HepG2 (cell line): ENCODE measurements at regions of chr17 and their contacts with region 1.

Region 1: GRCh38 chr17:76671123-76671911 is 27.8 kb upstream of the ST6GALNAC1 start:
- DNase-seq: peak; percentile 100
- ATAC-seq: peak; percentile 93
- H3K4me3 ChIP-seq: peak overlapping the region; percentile 66 to 83 (median 80)
- H3K27ac ChIP-seq: peak overlapping the region; percentile 83
- H3K4me1 ChIP-seq: peaks cover 54% of the 10 kb centered on the region
- H3K27me3 ChIP-seq: no peaks in the 10 kb centered on the region; a peak in 1 of 5 replicates
- CTCF ChIP-seq: peak; percentile 46; the same call in 1 of the 2 replicates
- EP300 ChIP-seq: no peak; a peak in 1 of 4 replicates
- POLR2A ChIP-seq: peak; percentile 80 to 83
- RAD21 ChIP-seq: peak; percentile 34; the same call in 1 of the 2 replicates

Region 2: GRCh38 chr17:76467366-76467765 is 204.0 kb before region 1 on chr17 and contains the start of gene AANAT:
- CTCF ChIA-PET with region 1: no interaction called
- POLR2A ChIA-PET with region 1: no interaction called
- in situ Hi-C with region 1: no loop called
- intact Hi-C with region 1: no loop called
- DNase-seq: no peak
- ATAC-seq: no peak
- H3K4me3 ChIP-seq: 0 out of 6 replicates have a peak within 1 kb of the TSS, but pooled peaks of 1 of the 3 experiments have one; percentile 63
- H3K27ac ChIP-seq: no peak within 1 kb of the TSS
- H3K4me1 ChIP-seq: peaks cover 48% of the 10 kb centered on the region
- H3K27me3 ChIP-seq: peaks cover 2 to 21% of the 10 kb centered on the region in 2 experiments; a peak in 3 of 5 replicates
- CTCF ChIP-seq: no peak
- EP300 ChIP-seq: no peak
- POLR2A ChIP-seq: no peak
- RAD21 ChIP-seq: no peak
- total RNA-seq, gene AANAT: not detected in 2 replicates

Region 3: DNA sequence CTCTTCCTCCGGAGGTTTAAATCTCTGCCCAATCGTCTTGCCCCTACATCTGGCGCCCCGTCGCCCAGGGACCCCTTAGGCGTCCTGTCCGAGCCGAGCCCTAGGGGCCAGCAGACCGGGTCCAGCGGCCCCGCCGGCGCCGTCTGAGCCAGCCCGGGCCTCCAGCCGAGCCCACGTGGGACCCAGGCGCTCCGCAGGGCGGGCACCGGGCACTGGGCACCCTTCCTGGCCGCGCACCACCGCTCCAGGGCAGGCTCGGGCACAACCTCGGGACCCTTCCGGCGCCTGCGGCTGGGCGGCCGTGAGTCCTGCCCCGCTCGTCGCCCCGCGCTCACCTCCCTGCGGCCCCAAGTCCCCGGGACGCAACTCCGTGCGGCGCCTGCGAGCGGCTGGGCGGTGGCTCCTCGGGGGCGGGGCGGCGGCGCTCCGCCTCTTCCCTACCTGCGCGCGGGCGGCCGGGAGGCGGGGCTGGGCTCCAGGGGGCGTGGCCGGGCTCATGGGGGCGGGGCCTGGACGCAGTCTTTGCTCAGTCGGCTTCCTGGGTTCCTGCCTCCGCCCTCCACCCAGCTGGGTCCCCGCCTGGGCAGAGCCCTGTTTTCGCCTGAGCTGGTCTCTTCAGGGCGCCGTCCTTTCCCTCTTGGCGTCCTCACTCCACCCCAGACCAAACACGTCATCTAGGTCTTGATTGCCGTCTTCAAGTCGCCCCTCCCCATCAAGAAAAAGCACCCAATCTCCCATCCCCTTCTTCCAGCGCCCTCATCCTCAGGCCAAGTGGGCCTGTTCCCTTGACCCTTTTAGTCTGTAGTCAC is 170.1 kb before region 1 on chr17 and contains the start of gene RHBDF2:
- CTCF ChIA-PET with region 1: no interaction called
- POLR2A ChIA-PET with region 1: interaction called, 18 read pairs
- in situ Hi-C with region 1: no loop called
- intact Hi-C with region 1: no loop called
- DNase-seq: peak; percentile 79
- ATAC-seq: peak; percentile 70
- H3K4me3 ChIP-seq: peak within 1 kb of the TSS; percentile 90 to 99 (median 96)
- H3K27ac ChIP-seq: peak within 1 kb of the TSS; percentile 64
- H3K4me1 ChIP-seq: peaks cover 65% of the 10 kb centered on the region
- H3K27me3 ChIP-seq: no peaks in the 10 kb centered on the region; a peak in 1 of 5 replicates
- CTCF ChIP-seq: no peak; the same call in 1 of the 2 replicates
- EP300 ChIP-seq: 0 out of 4 replicates have a peak, but pooled peaks of 1 of the 2 experiments have one; percentile 17
- POLR2A ChIP-seq: peak; percentile 66 to 94; a peak in 3 of 4 replicates
- RAD21 ChIP-seq: peak; percentile 59
- total RNA-seq, gene RHBDF2: 4.2 and 7.8 TPM in 2 replicates

Region 4: GRCh38 chr17:76557368-76558197 is 113.7 kb before region 1 on chr17:
- CTCF ChIA-PET with region 1: no interaction called
- POLR2A ChIA-PET with region 1: interaction called, 21 read pairs
- in situ Hi-C with region 1: no loop called
- intact Hi-C with region 1: no loop called
- DNase-seq: peak; percentile 98
- ATAC-seq: peak; percentile 95
- H3K4me3 ChIP-seq: peak overlapping the region; percentile 79 to 89 (median 86)
- H3K27ac ChIP-seq: peak overlapping the region; percentile 90
- H3K4me1 ChIP-seq: peaks cover 67% of the 10 kb centered on the region
- H3K27me3 ChIP-seq: no peaks in the 10 kb centered on the region; a peak in 1 of 5 replicates
- CTCF ChIP-seq: peak; percentile 88
- EP300 ChIP-seq: peak in 1 of 2 experiments; percentile 11; a peak in 1 of 4 replicates
- POLR2A ChIP-seq: peak; percentile 99 to 100
- RAD21 ChIP-seq: peak; percentile 64

Region 5: DNA sequence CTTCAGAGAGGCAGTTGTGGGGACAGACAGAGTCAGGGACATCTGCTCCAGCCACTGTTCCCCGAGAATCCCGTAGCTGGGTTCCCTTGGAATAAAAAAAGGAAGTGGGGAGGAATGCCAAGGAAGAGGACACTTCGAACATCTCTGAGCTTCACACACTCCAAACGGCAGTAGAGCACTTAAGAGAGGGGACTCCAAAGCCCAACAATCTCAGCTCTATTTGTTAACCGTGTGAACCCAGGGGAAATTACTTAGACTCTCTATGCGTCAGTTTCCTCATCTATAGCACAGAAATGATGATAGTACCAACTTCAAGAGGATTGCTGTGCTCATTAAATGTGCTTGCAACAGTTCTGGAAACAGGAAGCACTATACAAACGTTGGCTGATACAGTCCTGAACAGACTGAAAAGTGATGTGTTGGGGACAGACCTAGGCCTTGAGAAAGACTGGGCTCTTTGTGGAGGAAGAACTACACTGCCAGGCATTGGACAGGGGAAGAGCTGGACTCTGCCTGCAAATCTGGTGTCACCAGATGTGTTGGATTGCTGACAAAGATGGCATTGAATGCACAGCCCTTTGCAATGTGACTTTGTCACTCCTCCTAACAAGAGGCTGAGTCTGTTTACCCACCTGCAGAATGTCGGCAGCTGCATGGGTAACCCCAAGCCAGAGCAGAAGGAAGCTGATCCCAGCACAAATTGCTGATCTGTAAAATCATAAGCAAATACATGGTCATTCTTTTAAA is 73.4 kb before region 1 on chr17:
- CTCF ChIA-PET with region 1: no interaction called
- POLR2A ChIA-PET with region 1: interaction called, 18 read pairs
- in situ Hi-C with region 1: no loop called
- intact Hi-C with region 1: no loop called
- DNase-seq: peak; percentile 67
- ATAC-seq: peak; percentile 71
- H3K4me3 ChIP-seq: peak overlapping the region in 1 of 3 experiments; percentile 38; a peak in 2 of 6 replicates
- H3K27ac ChIP-seq: peak overlapping the region; percentile 65
- H3K4me1 ChIP-seq: peaks cover 77% of the 10 kb centered on the region
- H3K27me3 ChIP-seq: no peaks in the 10 kb centered on the region
- CTCF ChIP-seq: no peak
- EP300 ChIP-seq: no peak
- POLR2A ChIP-seq: no peak
- RAD21 ChIP-seq: no peak

Region 6: DNA sequence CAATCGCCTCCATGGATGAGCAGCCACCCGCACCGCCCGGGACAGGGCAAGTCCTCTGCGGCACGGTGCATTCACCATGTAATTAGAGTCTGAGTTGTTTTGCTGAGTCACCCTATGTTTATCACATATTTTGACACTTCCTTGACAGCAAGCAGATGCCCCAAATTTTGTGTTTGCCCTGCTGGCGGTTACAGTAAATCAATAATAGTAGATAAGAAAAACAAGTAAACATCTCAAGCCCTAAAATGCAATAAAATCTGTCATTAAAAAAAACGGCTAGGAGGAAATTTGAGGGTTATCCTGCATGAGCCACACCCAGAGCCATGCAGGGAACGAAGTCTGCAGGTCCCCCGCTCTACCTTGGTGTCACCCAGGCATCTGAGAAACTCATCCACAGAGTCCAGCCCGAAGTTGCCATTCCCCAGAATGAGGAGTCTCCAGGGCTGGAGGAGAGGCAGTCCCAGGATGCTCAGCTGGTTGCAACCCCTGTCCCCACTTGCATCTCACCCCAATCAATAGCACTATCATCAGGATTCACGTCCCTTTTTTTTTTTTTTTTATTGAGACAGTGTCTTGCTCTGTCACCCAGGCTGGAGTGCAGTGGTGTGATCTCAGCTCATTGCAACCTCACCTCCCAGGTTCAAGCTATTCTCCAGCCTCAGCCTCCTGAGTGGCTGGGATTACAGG is 11.2 kb before region 1 on chr17:
- CTCF ChIA-PET with region 1: no interaction called
- POLR2A ChIA-PET with region 1: interaction called, 30 read pairs
- in situ Hi-C with region 1: no loop called
- intact Hi-C with region 1: no loop called
- DNase-seq: no peak
- ATAC-seq: peak; percentile 76
- H3K4me3 ChIP-seq: peak overlapping the region in 2 of 3 experiments; percentile 5 to 16; a peak in 2 of 6 replicates
- H3K27ac ChIP-seq: no peak overlapping the region
- H3K4me1 ChIP-seq: peaks cover 61% of the 10 kb centered on the region
- H3K27me3 ChIP-seq: no peaks in the 10 kb centered on the region
- CTCF ChIP-seq: no peak
- EP300 ChIP-seq: no peak
- POLR2A ChIP-seq: no peak
- RAD21 ChIP-seq: no peak

Region 7: DNA sequence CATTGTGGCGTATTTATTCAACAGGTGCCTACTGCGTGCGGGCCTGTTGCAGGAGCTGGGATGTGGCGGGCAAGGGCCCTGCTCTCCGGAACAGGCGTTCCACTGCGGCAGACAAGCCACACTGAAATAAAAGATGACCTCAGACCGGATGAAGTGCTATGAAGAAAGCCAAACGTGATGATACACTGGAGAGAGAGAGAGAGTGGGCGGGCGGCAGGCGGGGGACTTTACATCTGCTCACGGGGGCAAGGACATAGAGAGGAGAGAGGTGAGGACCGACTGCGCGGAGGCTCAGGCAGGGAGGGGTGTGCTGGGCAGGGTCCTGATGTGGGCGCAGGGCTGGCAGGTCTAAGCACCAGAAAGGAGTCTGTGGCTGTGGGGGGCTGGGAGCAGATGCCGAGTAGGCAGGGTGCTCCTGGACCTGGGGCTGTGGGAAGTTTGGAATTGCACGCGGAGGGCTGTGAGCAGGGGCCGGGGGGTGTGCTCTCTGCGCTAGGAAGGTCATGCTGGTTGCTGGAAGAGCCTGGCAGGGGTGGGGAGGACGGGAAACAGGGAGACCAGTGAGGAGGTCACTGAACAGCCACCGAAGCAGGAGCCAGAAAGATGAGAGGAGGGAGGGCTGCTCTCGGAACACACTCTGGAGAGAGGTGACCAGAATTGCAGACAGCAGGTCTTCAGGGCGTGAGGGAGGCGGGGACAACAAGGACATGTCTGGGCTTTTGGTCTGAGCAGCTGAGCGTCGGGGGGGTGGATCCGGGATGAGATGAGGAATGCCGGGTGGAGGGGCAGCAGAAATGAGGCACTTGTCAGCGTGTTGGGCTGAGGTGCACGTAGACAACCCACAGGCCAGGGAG is 29.5 kb after region 1 on chr17:
- CTCF ChIA-PET with region 1: no interaction called
- POLR2A ChIA-PET with region 1: interaction called, 25 read pairs
- in situ Hi-C with region 1: no loop called
- intact Hi-C with region 1: no loop called
- DNase-seq: peak; percentile 86
- ATAC-seq: peak; percentile 74
- H3K4me3 ChIP-seq: peak overlapping the region; percentile 56 to 75 (median 62)
- H3K27ac ChIP-seq: peak overlapping the region; percentile 71
- H3K4me1 ChIP-seq: peaks cover 74% of the 10 kb centered on the region
- H3K27me3 ChIP-seq: no peaks in the 10 kb centered on the region
- CTCF ChIP-seq: peak; percentile 27; the same call in 1 of the 2 replicates
- EP300 ChIP-seq: no peak
- POLR2A ChIP-seq: 0 out of 4 replicates have a peak, but pooled peaks of 1 of the 2 experiments have one; percentile 34
- RAD21 ChIP-seq: no peak

Region 8: GRCh38 chr17:76737082-76737675 is 65.9 kb after region 1 on chr17 and contains the start of gene SRSF2:
- CTCF ChIA-PET with region 1: no interaction called
- POLR2A ChIA-PET with region 1: interaction called, 12 read pairs
- in situ Hi-C with region 1: no loop called
- intact Hi-C with region 1: no loop called
- DNase-seq: peak; percentile 98
- ATAC-seq: peak; percentile 74
- H3K4me3 ChIP-seq: peak within 1 kb of the TSS; percentile 93 to 100 (median 100)
- H3K27ac ChIP-seq: peak within 1 kb of the TSS; percentile 97
- H3K4me1 ChIP-seq: peaks cover 51% of the 10 kb centered on the region
- H3K27me3 ChIP-seq: peaks cover 0 to 3% of the 10 kb centered on the region in 2 experiments; a peak in 1 of 5 replicates
- CTCF ChIP-seq: peak; percentile 18
- EP300 ChIP-seq: peak; percentile 57 to 71; a peak in 3 of 4 replicates
- POLR2A ChIP-seq: peak; percentile 100
- RAD21 ChIP-seq: peak; percentile 63
- total RNA-seq, gene SRSF2: 249 and 319 TPM in 2 replicates